B cell (primary cell): ENCODE measurements at regions of chr5 and their contacts with region 1.

Region 1: DNA sequence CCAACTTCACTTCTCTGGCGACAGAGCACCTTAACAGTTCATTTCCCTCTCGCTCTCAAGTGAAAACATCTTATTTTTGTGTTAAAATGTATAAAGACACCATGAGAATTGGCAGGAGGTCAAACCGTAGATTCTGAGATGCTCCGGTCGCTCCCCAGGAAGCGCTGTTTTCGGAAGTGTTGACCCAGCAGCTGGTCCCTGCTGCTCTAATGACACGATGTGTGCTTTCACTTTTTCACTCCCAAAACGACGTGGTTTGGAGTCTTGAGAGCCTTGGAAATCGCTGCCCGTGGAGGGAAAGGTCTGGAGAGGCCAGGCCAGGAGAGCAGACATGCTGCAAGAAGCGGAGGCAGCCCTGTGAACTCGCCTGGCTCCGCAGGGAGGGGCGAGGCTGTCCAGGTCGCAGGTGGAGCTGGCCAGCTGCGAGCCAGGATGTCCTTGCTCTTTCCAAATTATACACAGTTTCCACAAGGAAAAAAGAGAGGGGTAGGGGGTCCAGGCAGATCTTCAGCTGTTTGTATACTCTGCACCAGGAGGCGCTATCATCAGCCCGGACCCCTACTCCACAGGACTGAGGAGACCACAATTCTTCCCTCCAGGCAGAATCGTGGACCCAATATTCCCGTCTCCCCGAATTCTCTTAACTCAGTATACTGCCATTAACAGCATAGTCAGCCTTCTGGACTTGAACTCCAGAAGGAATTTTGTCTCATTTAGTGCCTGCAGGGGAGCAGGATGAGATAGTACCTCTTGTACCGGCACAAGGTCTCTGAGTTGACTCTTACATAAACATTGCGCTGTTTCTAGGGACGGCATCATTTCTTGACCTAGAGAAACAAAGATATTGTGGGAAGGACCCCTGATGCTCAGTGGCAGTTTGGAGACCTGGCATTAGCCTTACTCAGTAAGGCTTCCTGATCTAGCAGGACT is 248.6 kb upstream of the ANKRD55 start:
- DNase-seq: peak; percentile 72
- ATAC-seq: peak; percentile 18
- H3K4me3 ChIP-seq: peak overlapping the region; percentile 56 to 76 (median 65)
- H3K4me3 Mint-ChIP-seq: peak overlapping the region; percentile 95
- H3K27ac ChIP-seq: peak overlapping the region; percentile 93 to 96
- H3K27ac Mint-ChIP-seq: peak overlapping the region; percentile 97
- H3K4me1 ChIP-seq: peaks cover 42 to 57% of the 10 kb centered on the region in 2 donors
- H3K4me1 Mint-ChIP-seq: peaks cover 41% of the 10 kb centered on the region
- H3K27me3 ChIP-seq: no peaks in the 10 kb centered on the region
- H3K27me3 Mint-ChIP-seq: no peaks in the 10 kb centered on the region
- CTCF ChIP-seq: peak; percentile 52

Region 2: GRCh38 chr5:55994574-55995333 is 486.9 kb before region 1 on chr5 and contains the start of gene IL6ST:
- CTCF ChIA-PET with region 1: no interaction called
- POLR2A ChIA-PET with region 1: no interaction called
- intact Hi-C with region 1: loop called (anchors 5 kb)
- DNase-seq: peak; percentile 96
- ATAC-seq: peak; percentile 94
- H3K4me3 ChIP-seq: peak within 1 kb of the TSS; percentile 75 to 97 (median 91)
- H3K4me3 Mint-ChIP-seq: peak within 1 kb of the TSS; percentile 89
- H3K27ac ChIP-seq: peak within 1 kb of the TSS; percentile 75 to 94
- H3K27ac Mint-ChIP-seq: peak within 1 kb of the TSS; percentile 78
- H3K4me1 ChIP-seq: peaks cover 11 to 18% of the 10 kb centered on the region in 2 donors
- H3K4me1 Mint-ChIP-seq: peaks cover 33% of the 10 kb centered on the region
- H3K27me3 ChIP-seq: no peaks in the 10 kb centered on the region
- H3K27me3 Mint-ChIP-seq: peaks cover 4% of the 10 kb centered on the region
- CTCF ChIP-seq: no peak
- total RNA-seq, gene IL6ST: 28.0 and 31.1 TPM in 2 replicates

Region 3: GRCh38 chr5:56346741-56347539 is 134.8 kb before region 1 on chr5:
- CTCF ChIA-PET with region 1: no interaction called
- POLR2A ChIA-PET with region 1: no interaction called
- intact Hi-C with region 1: loop called (anchors 10 kb)
- DNase-seq: no peak
- ATAC-seq: no peak
- H3K4me3 ChIP-seq: no peak overlapping the region
- H3K4me3 Mint-ChIP-seq: no peak overlapping the region
- H3K27ac ChIP-seq: no peak overlapping the region
- H3K27ac Mint-ChIP-seq: no peak overlapping the region
- H3K4me1 ChIP-seq: peaks cover 40 to 42% of the 10 kb centered on the region in 2 donors
- H3K4me1 Mint-ChIP-seq: peaks cover 51% of the 10 kb centered on the region
- H3K27me3 ChIP-seq: no peaks in the 10 kb centered on the region
- H3K27me3 Mint-ChIP-seq: no peaks in the 10 kb centered on the region
- CTCF ChIP-seq: no peak

Region 4: DNA sequence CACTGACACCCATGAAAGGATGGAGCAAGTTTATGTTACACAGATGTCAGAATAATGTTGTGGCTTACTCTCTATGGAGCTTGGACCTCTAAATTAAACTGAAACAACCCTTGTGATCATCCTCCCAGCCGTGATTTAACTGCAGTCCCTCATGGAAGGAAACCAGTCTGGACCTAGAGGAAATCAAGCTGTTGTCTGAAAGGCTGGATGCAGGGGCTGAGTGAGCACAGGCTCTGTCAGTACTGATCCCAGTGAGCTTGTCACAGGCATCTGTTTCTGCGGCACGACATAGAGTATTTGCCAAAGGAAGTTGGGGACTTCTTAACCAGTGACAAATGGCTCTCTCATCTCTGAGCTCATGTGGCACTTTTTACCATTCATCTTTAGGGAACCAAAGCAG is 50.8 kb after region 1 on chr5:
- CTCF ChIA-PET with region 1: no interaction called
- POLR2A ChIA-PET with region 1: no interaction called
- intact Hi-C with region 1: no loop called
- DNase-seq: no peak
- ATAC-seq: no peak
- H3K4me3 ChIP-seq: no peak overlapping the region
- H3K4me3 Mint-ChIP-seq: no peak overlapping the region
- H3K27ac ChIP-seq: no peak overlapping the region
- H3K27ac Mint-ChIP-seq: no peak overlapping the region
- H3K4me1 ChIP-seq: no peaks in the 10 kb centered on the region
- H3K4me1 Mint-ChIP-seq: no peaks in the 10 kb centered on the region
- H3K27me3 ChIP-seq: no peaks in the 10 kb centered on the region
- H3K27me3 Mint-ChIP-seq: no peaks in the 10 kb centered on the region
- CTCF ChIP-seq: no peak

Region 5: GRCh38 chr5:56565644-56566043 is 84.0 kb after region 1 on chr5:
- CTCF ChIA-PET with region 1: interaction called, 5 read pairs
- POLR2A ChIA-PET with region 1: interaction called, 4 read pairs
- intact Hi-C with region 1: loop called (anchors 1 kb)
- DNase-seq: peak; percentile 82
- ATAC-seq: peak; percentile 97
- H3K4me3 ChIP-seq: peak overlapping the region in 3 of 5 experiments; percentile 6 to 20 (median 9)
- H3K4me3 Mint-ChIP-seq: peak overlapping the region; percentile 56
- H3K27ac ChIP-seq: no peak overlapping the region
- H3K27ac Mint-ChIP-seq: peak overlapping the region; percentile 69
- H3K4me1 ChIP-seq: peaks cover 34 to 35% of the 10 kb centered on the region in 2 donors
- H3K4me1 Mint-ChIP-seq: peaks cover 41% of the 10 kb centered on the region
- H3K27me3 ChIP-seq: no peaks in the 10 kb centered on the region
- H3K27me3 Mint-ChIP-seq: no peaks in the 10 kb centered on the region
- CTCF ChIP-seq: no peak

Region 6: GRCh38 chr5:56670118-56670483 is 188.4 kb after region 1 on chr5:
- CTCF ChIA-PET with region 1: interaction called, 18 read pairs
- POLR2A ChIA-PET with region 1: interaction called, 15 read pairs
- intact Hi-C with region 1: loop called (anchors 1 kb)
- DNase-seq: peak; percentile 95
- ATAC-seq: no peak
- H3K4me3 ChIP-seq: no peak overlapping the region
- H3K4me3 Mint-ChIP-seq: peak overlapping the region; percentile 75
- H3K27ac ChIP-seq: peak overlapping the region; percentile 97 to 98
- H3K27ac Mint-ChIP-seq: peak overlapping the region; percentile 97
- H3K4me1 ChIP-seq: peaks cover 58% of the 10 kb centered on the region in 2 donors
- H3K4me1 Mint-ChIP-seq: peaks cover 74% of the 10 kb centered on the region
- H3K27me3 ChIP-seq: no peaks in the 10 kb centered on the region
- H3K27me3 Mint-ChIP-seq: no peaks in the 10 kb centered on the region
- CTCF ChIP-seq: no peak

Region 7: GRCh38 chr5:56737002-56737621 is 255.4 kb after region 1 on chr5:
- CTCF ChIA-PET with region 1: no interaction called
- POLR2A ChIA-PET with region 1: no interaction called
- intact Hi-C with region 1: loop called (anchors 5 kb)
- DNase-seq: peak; percentile 34
- ATAC-seq: peak; percentile 18
- H3K4me3 ChIP-seq: peak overlapping the region in 1 of 5 experiments; percentile 48
- H3K4me3 Mint-ChIP-seq: peak overlapping the region; percentile 73
- H3K27ac ChIP-seq: peak overlapping the region; percentile 79 to 91
- H3K27ac Mint-ChIP-seq: peak overlapping the region; percentile 87
- H3K4me1 ChIP-seq: peaks cover 63% of the 10 kb centered on the region in 2 donors
- H3K4me1 Mint-ChIP-seq: peaks cover 63% of the 10 kb centered on the region
- H3K27me3 ChIP-seq: no peaks in the 10 kb centered on the region
- H3K27me3 Mint-ChIP-seq: no peaks in the 10 kb centered on the region
- CTCF ChIP-seq: no peak